Activated naive CD4-positive, alpha-beta T cell treated with anti-CD3 and anti-CD28 coated beads, Interleukin-2, amount 10 ng/mL, durations not matched to agents 7 days and 5 days (primary cell): ENCODE measurements at regions of chr2 and their contacts with region 1.

Region 1: GRCh38 chr2:54558188-54559005 is 102.3 kb downstream of the SPTBN1 start:
- DNase-seq: peak; percentile 88
- H3K4me3 Mint-ChIP-seq: peak overlapping the region; percentile 91
- H3K27ac Mint-ChIP-seq: peak overlapping the region; percentile 91
- H3K4me1 Mint-ChIP-seq: peaks cover 38% of the 10 kb centered on the region
- H3K27me3 Mint-ChIP-seq: peaks cover 10% of the 10 kb centered on the region

Region 2: DNA sequence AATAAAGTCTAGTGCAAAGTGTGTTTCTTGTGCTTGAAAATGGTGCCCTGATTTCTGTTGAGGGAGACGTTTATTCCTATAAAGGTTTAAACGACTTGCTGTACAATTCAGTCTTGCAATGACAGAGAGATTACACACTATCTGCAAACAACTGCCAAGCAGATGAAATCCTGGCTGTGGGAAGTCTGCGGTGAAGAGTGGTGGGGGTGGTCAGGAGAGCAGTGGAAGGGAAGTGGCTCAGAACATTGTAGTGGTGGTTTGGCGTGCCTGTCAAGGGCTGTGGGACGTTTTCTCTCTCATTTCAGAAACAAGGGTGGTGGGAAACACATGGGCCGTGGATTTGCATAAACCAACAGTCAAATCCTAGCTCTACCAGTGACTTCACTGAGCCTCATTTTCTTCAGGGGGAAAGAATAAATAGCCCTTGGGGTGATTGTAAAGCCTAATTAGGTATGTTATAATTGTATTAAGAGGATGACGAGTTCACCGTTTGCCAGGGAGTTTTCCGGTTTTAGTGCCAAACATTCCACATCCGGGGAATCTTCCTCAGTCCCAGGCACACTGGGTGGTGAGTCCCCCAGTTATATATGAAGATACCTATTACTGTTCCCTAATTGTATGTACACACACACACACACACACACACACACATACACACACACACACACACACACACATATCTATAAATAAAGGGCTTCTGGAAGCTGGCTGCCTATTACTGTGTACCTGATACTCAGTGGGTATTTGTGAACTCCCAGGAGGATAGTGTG is 12.7 kb after region 1 on chr2:
- CTCF ChIA-PET with region 1: interaction called, 20 read pairs
- DNase-seq: peak; percentile 82
- H3K4me3 Mint-ChIP-seq: peak overlapping the region; percentile 71
- H3K27ac Mint-ChIP-seq: peak overlapping the region; percentile 94
- H3K4me1 Mint-ChIP-seq: peaks cover 93% of the 10 kb centered on the region
- H3K27me3 Mint-ChIP-seq: no peaks in the 10 kb centered on the region

Region 3: GRCh38 chr2:54606393-54606969 is 48.1 kb after region 1 on chr2:
- CTCF ChIA-PET with region 1: interaction called, 17 read pairs
- DNase-seq: peak; percentile 64
- H3K4me3 Mint-ChIP-seq: peak overlapping the region; percentile 29
- H3K27ac Mint-ChIP-seq: no peak overlapping the region
- H3K4me1 Mint-ChIP-seq: peaks cover 83% of the 10 kb centered on the region
- H3K27me3 Mint-ChIP-seq: no peaks in the 10 kb centered on the region

Region 4: GRCh38 chr2:54639609-54640008 is 81.2 kb after region 1 on chr2:
- CTCF ChIA-PET with region 1: no interaction called
- DNase-seq: no peak
- H3K4me3 Mint-ChIP-seq: no peak overlapping the region
- H3K27ac Mint-ChIP-seq: no peak overlapping the region
- H3K4me1 Mint-ChIP-seq: peaks cover 31% of the 10 kb centered on the region
- H3K27me3 Mint-ChIP-seq: no peaks in the 10 kb centered on the region